GM12878 (cell line): ENCODE measurements at regions of chr1 and their contacts with region 1.

Region 1: GRCh38 chr1:171801487-171801891 is 20.0 kb downstream of the METTL13 start:
- DNase-seq: no peak
- ATAC-seq: peak; percentile 58
- H3K4me3 ChIP-seq: no peak overlapping the region
- H3K27ac ChIP-seq: no peak overlapping the region
- H3K4me1 ChIP-seq: peaks cover 7% of the 10 kb centered on the region
- H3K27me3 ChIP-seq: no peaks in the 10 kb centered on the region
- CTCF ChIP-seq: peak; percentile 71 to 72 (median 72)
- EP300 ChIP-seq: no peak
- POLR2A ChIP-seq: no peak
- RAD21 ChIP-seq: peak; percentile 80

Region 2: GRCh38 chr1:171654942-171655745 is 146.3 kb before region 1 on chr1:
- CTCF ChIA-PET with region 1: interaction called, 10 read pairs
- POLR2A ChIA-PET with region 1: no interaction called
- RAD21 ChIA-PET with region 1: interaction called, 3 read pairs
- SMC1A ChIA-PET with region 1: no interaction called
- in situ Hi-C with region 1: no loop called
- intact Hi-C with region 1: no loop called
- DNase-seq: no peak
- ATAC-seq: peak; percentile 97
- H3K4me3 ChIP-seq: no peak overlapping the region
- H3K27ac ChIP-seq: no peak overlapping the region
- H3K4me1 ChIP-seq: no peaks in the 10 kb centered on the region
- H3K27me3 ChIP-seq: peaks cover 0 to 3% of the 10 kb centered on the region in 2 experiments; a peak in 1 of 4 replicates
- CTCF ChIP-seq: peak; percentile 62 to 89 (median 86)
- EP300 ChIP-seq: no peak
- POLR2A ChIP-seq: no peak
- RAD21 ChIP-seq: peak; percentile 62

Region 3: DNA sequence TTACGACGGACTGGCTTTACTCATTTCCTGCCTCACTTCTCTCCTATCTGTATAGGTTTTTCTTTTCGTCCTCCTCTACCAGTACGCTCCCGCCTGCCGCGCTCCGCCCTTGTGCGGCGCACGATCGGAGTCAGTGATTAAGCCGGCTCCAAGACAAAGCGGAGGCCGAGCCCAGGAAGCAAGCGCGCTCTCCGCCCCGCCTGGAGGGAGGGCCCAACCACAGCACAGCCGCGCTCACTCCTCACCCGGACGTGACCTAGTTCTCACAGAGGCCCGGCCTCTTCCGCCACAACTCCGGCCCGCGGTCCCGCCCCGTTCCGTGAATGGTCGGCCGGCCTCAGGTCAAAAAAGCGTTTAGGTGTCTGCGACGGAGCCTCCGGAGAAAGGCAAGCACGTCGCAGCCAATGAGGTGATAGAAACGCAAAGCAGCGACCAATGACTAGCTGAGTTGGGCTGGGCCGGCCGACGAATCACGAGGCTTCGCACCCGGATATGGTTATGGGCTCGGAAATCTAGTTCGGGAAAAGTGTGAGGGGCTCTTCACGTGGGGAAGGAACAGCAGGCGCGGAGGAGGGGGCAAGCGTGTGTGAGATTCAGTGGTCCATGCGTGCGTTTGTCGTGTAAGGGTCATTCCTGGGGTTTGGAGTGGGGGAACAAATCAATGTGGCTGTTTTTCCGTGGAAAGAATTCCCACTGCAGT is 20.2 kb before region 1 on chr1 and contains the start of gene METTL13:
- CTCF ChIA-PET with region 1: interaction called, 29 read pairs
- POLR2A ChIA-PET with region 1: interaction called, 3 read pairs
- RAD21 ChIA-PET with region 1: interaction called, 8 read pairs
- SMC1A ChIA-PET with region 1: interaction called, 11 read pairs
- in situ Hi-C with region 1: no loop called
- intact Hi-C with region 1: no loop called
- DNase-seq: peak; percentile 96
- ATAC-seq: peak; percentile 99
- H3K4me3 ChIP-seq: peak within 1 kb of the TSS; percentile 93
- H3K27ac ChIP-seq: peak within 1 kb of the TSS; percentile 82
- H3K4me1 ChIP-seq: peaks cover 10% of the 10 kb centered on the region; the same call in 1 of the 2 replicates
- H3K27me3 ChIP-seq: no peaks in the 10 kb centered on the region
- CTCF ChIP-seq: no peak
- EP300 ChIP-seq: no peak
- POLR2A ChIP-seq: peak; percentile 96
- RAD21 ChIP-seq: no peak
- polyA plus RNA-seq, gene METTL13: 12.2 to 16.8 TPM

Region 4: DNA sequence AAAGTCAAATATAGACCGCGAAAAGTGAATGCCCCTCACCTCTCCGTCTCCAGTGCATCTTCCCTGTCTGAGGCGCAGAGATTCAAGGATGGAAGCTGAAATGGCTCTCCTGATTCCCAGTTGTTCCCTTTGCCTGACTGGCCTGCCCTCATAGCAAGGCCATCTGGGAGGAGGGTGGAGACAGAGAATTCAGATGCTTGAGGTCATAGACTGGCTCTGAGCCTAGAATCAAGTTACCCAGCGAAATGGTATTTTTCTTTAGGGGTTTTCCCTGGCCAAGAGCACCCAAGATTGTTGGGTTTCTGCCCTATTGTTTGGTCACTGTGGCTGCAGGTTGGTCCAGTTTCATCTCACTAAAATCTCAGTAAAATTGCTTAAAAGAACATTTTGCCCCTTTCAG is 12.8 kb before region 1 on chr1:
- CTCF ChIA-PET with region 1: interaction called, 29 read pairs
- POLR2A ChIA-PET with region 1: interaction called, 3 read pairs
- RAD21 ChIA-PET with region 1: no interaction called
- SMC1A ChIA-PET with region 1: interaction called, 11 read pairs
- in situ Hi-C with region 1: no loop called
- intact Hi-C with region 1: no loop called
- DNase-seq: no peak
- ATAC-seq: peak; percentile 50
- H3K4me3 ChIP-seq: no peak overlapping the region
- H3K27ac ChIP-seq: no peak overlapping the region
- H3K4me1 ChIP-seq: peaks cover 10% of the 10 kb centered on the region; the same call in 1 of the 2 replicates
- H3K27me3 ChIP-seq: no peaks in the 10 kb centered on the region
- CTCF ChIP-seq: no peak
- EP300 ChIP-seq: no peak
- POLR2A ChIP-seq: no peak
- RAD21 ChIP-seq: no peak

Region 5: GRCh38 chr1:171984850-171985485 is 183.5 kb after region 1 on chr1:
- CTCF ChIA-PET with region 1: interaction called, 322 read pairs
- POLR2A ChIA-PET with region 1: interaction called, 3 read pairs
- RAD21 ChIA-PET with region 1: interaction called, 87 read pairs
- SMC1A ChIA-PET with region 1: interaction called, 142 read pairs
- in situ Hi-C with region 1: loop called (anchors 5 kb)
- intact Hi-C with region 1: loop called (anchors 1 kb)
- DNase-seq: no peak
- ATAC-seq: peak; percentile 88
- H3K4me3 ChIP-seq: no peak overlapping the region
- H3K27ac ChIP-seq: no peak overlapping the region
- H3K4me1 ChIP-seq: no peaks in the 10 kb centered on the region
- H3K27me3 ChIP-seq: no peaks in the 10 kb centered on the region; a peak in 1 of 4 replicates
- CTCF ChIP-seq: peak; percentile 71 to 77 (median 74)
- EP300 ChIP-seq: no peak
- POLR2A ChIP-seq: no peak
- RAD21 ChIP-seq: peak; percentile 76

Region 6: DNA sequence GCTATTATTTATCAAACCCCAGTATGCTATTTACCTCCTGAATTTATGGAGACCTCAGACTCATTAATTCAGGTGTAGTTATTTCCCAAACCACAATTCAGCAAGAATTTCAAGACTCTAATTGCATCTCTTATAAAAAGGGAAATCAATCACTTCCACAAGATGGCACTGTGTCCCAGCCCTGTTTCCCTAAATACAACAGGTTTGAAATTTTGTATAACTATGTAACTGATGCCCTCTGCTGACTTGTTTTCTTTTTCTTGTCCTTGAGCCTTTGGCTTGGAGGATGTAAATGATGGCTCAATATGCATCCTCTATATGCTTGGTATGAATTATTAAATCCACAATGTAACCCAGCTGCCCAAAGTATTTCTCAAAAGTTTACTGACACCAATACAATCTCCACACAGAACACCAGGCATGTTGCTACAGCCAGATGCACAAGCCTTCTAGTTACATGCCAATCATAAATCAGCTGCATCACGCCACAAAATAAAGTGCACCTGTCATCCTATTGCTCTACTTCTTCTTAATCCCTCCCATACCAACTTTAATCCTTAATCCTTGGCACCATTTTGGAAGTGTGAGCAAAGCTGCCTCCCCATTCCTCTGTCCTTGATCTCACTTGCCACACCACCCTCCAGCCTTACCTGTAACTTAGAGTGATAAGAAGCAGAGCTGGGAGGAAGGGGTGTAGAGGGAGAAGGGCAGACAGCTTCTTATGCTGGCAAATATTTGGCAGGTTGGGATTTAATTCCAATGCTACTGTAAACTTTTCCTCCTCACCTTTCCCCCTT is 628.0 kb after region 1 on chr1:
- CTCF ChIA-PET with region 1: interaction called, 6 read pairs
- POLR2A ChIA-PET with region 1: no interaction called
- RAD21 ChIA-PET with region 1: no interaction called
- SMC1A ChIA-PET with region 1: no interaction called
- in situ Hi-C with region 1: loop called (anchors 25 kb)
- intact Hi-C with region 1: loop called (anchors 10 kb)
- DNase-seq: peak; percentile 34
- ATAC-seq: peak; percentile 85
- H3K4me3 ChIP-seq: no peak overlapping the region
- H3K27ac ChIP-seq: no peak overlapping the region
- H3K4me1 ChIP-seq: peaks cover 8% of the 10 kb centered on the region
- H3K27me3 ChIP-seq: no peaks in the 10 kb centered on the region
- CTCF ChIP-seq: peak; percentile 56 to 75 (median 65)
- EP300 ChIP-seq: no peak
- POLR2A ChIP-seq: no peak
- RAD21 ChIP-seq: peak; percentile 67